Mammary epithelial cell (primary cell): ENCODE measurements at regions of chr5 and their contacts with region 1.

Region 1: GRCh38 chr5:61933787-61934626 is 372.0 kb upstream of the KIF2A start:
- DNase-seq: peak; percentile 69
- H3K4me3 ChIP-seq: no peak overlapping the region
- H3K27ac ChIP-seq: no peak overlapping the region
- H3K4me1 ChIP-seq: peaks cover 28% of the 10 kb centered on the region
- H3K27me3 ChIP-seq: no peaks in the 10 kb centered on the region
- CTCF ChIP-seq: peak; percentile 81 to 85

Region 2: DNA sequence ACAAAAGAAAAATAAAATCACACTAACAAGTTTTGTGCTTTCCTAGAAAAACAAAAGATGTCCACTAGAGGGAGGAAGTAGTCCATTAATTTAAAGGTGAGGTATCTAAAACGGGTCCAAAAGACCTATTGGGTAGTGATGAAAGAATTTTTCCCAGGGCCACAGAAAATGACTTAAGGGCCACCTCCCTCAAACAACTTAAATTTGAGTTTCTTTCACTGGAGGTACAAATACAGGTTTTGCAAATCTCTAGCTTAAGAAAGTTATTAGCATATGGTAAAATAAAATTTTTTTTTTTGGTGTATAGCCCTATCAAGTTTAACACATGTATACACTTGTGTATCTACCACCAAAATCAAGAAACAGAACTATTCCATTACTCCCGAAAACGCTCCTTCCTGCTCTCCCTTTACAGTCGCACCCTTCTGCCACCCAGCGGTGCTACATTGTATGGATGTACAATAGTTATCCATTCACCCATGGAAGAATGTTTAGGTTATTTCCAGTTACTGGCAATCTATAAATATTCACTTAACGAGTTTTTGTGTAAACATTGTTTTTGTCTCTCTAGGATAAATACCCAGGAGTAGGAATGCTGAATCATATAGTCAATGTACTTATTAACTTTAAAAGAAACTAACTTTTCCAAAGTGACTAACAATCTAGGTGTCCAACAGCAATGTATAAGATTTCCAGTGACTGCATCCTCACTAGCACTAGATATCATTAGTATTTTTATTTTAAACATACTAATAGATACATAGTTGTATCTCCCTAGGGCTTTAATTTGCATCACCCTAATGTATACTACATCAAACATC is 1256.0 kb before region 1 on chr5:
- CTCF ChIA-PET with region 1: interaction called, 3 read pairs
- dilution Hi-C with region 1: no loop called
- in situ Hi-C with region 1: loop called in 1 of 2 experiments (anchors 25 kb)
- intact Hi-C with region 1: loop called (anchors 1 kb)
- DNase-seq: peak; percentile 37
- H3K4me3 ChIP-seq: no peak overlapping the region
- H3K27ac ChIP-seq: no peak overlapping the region
- H3K4me1 ChIP-seq: no peaks in the 10 kb centered on the region
- H3K27me3 ChIP-seq: no peaks in the 10 kb centered on the region
- CTCF ChIP-seq: peak; percentile 50 to 58

Region 3: DNA sequence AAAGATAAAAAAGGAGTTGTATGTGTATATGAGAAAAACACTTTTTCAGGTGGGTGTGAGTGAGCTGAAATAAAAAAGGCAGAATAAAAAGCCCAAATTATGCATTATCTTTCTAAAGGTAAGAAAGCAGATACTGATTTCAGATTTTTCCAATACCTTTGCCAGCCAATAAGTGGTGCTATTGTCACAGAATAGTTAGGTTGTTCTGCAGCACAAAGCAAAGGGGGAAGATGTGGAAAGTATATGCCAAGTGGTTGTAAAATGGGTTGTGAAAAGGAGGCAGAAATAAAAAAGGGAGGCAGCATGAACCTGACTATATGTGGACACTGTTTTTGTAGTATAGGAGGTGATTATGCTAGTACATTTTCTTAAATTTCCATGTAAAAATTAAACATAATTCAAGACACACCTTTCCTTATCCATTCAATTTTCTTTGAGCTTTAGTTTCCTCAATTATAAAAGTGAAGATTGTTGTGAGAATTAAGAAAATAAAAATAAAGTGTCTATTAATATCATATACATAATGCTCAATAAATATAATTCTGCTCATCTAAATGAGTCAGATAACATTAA is 878.5 kb before region 1 on chr5:
- CTCF ChIA-PET with region 1: no interaction called
- dilution Hi-C with region 1: no loop called
- in situ Hi-C with region 1: no loop called
- intact Hi-C with region 1: loop called (anchors 2 kb)
- DNase-seq: peak; percentile 40
- H3K4me3 ChIP-seq: no peak overlapping the region
- H3K27ac ChIP-seq: no peak overlapping the region
- H3K4me1 ChIP-seq: peaks cover 34% of the 10 kb centered on the region
- H3K27me3 ChIP-seq: no peaks in the 10 kb centered on the region
- CTCF ChIP-seq: peak; percentile 73 to 85

Region 4: GRCh38 chr5:61280205-61280604 is 653.8 kb before region 1 on chr5:
- CTCF ChIA-PET with region 1: no interaction called
- dilution Hi-C with region 1: no loop called
- in situ Hi-C with region 1: no loop called
- intact Hi-C with region 1: loop called (anchors 10 kb)
- DNase-seq: peak; percentile 89
- H3K4me3 ChIP-seq: no peak overlapping the region
- H3K27ac ChIP-seq: peak overlapping the region; percentile 52
- H3K4me1 ChIP-seq: peaks cover 34% of the 10 kb centered on the region
- H3K27me3 ChIP-seq: no peaks in the 10 kb centered on the region
- CTCF ChIP-seq: no peak

Region 5: GRCh38 chr5:61658592-61659008 is 275.4 kb before region 1 on chr5:
- CTCF ChIA-PET with region 1: no interaction called
- dilution Hi-C with region 1: no loop called
- in situ Hi-C with region 1: no loop called
- intact Hi-C with region 1: loop called (anchors 1 kb)
- DNase-seq: peak; percentile 55
- H3K4me3 ChIP-seq: no peak overlapping the region
- H3K27ac ChIP-seq: no peak overlapping the region
- H3K4me1 ChIP-seq: no peaks in the 10 kb centered on the region
- H3K27me3 ChIP-seq: no peaks in the 10 kb centered on the region
- CTCF ChIP-seq: peak; percentile 92 to 95

Region 6: GRCh38 chr5:61919920-61920319 is 14.1 kb before region 1 on chr5:
- CTCF ChIA-PET with region 1: no interaction called
- dilution Hi-C with region 1: no loop called
- in situ Hi-C with region 1: no loop called
- intact Hi-C with region 1: loop called (anchors 1 kb)
- DNase-seq: peak; percentile 94
- H3K4me3 ChIP-seq: no peak overlapping the region
- H3K27ac ChIP-seq: peak overlapping the region; percentile 100
- H3K4me1 ChIP-seq: peaks cover 61% of the 10 kb centered on the region
- H3K27me3 ChIP-seq: no peaks in the 10 kb centered on the region
- CTCF ChIP-seq: no peak